GM12878 (cell line): ENCODE measurements at regions of chr4 and their contacts with region 1.

Region 1: GRCh38 chr4:156560701-156561100 is 410.9 kb downstream of the PDGFC start:
- DNase-seq: no peak
- ATAC-seq: no peak
- H3K4me3 ChIP-seq: no peak overlapping the region
- H3K27ac ChIP-seq: no peak overlapping the region
- H3K4me1 ChIP-seq: no peaks in the 10 kb centered on the region
- H3K27me3 ChIP-seq: no peaks in the 10 kb centered on the region
- CTCF ChIP-seq: no peak
- EP300 ChIP-seq: no peak
- POLR2A ChIP-seq: no peak
- RAD21 ChIP-seq: no peak

Region 2: DNA sequence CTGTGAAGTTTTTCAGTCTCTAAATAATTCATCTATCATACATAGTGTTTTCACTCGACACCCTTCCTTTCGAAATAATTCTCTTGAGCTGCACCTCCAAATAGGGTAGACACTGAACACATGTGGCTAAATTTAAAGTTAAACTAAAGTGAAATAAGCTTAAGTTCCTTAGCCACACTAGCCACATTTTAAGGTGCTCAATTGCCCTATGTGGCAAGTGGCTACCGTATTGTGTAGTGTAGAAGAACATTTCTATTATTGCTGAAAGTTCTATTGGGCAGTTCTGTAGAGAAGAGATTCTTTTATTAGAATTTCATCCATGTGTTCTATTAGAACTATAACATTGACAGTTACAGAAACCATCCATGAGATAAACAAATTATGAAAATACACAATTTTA is 500.0 kb before region 1 on chr4:
- CTCF ChIA-PET with region 1: no interaction called
- POLR2A ChIA-PET with region 1: no interaction called
- RAD21 ChIA-PET with region 1: no interaction called
- SMC1A ChIA-PET with region 1: no interaction called
- in situ Hi-C with region 1: no loop called
- intact Hi-C with region 1: no loop called
- DNase-seq: no peak
- ATAC-seq: no peak
- H3K4me3 ChIP-seq: no peak overlapping the region
- H3K27ac ChIP-seq: no peak overlapping the region
- H3K4me1 ChIP-seq: no peaks in the 10 kb centered on the region
- H3K27me3 ChIP-seq: no peaks in the 10 kb centered on the region
- CTCF ChIP-seq: no peak
- EP300 ChIP-seq: no peak
- POLR2A ChIP-seq: no peak
- RAD21 ChIP-seq: no peak

Region 3: DNA sequence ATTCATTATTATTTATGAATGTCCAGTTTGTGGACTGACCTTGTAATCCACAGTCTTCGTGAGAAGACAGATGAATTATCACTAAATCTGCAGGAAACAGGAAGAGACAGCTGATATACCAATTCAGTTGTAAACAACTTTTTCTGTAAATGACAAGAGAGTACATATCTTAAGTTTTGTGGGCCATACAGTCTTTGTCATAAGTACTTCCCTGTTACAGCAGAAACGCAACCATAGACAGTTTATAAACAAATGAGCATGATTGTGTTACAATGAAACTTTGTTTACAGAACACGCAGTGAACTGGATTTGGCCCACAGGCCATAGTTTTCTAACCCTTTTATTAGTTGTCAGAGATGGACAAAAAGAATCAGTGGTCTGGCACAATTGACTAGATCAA is 32.5 kb before region 1 on chr4:
- CTCF ChIA-PET with region 1: no interaction called
- POLR2A ChIA-PET with region 1: no interaction called
- RAD21 ChIA-PET with region 1: no interaction called
- SMC1A ChIA-PET with region 1: no interaction called
- in situ Hi-C with region 1: no loop called
- intact Hi-C with region 1: loop called (anchors 1 kb)
- DNase-seq: no peak
- ATAC-seq: no peak
- H3K4me3 ChIP-seq: no peak overlapping the region
- H3K27ac ChIP-seq: no peak overlapping the region
- H3K4me1 ChIP-seq: no peaks in the 10 kb centered on the region
- H3K27me3 ChIP-seq: no peaks in the 10 kb centered on the region
- CTCF ChIP-seq: no peak
- EP300 ChIP-seq: no peak
- POLR2A ChIP-seq: no peak
- RAD21 ChIP-seq: no peak

Region 4: GRCh38 chr4:156598138-156598681 is 37.5 kb after region 1 on chr4:
- CTCF ChIA-PET with region 1: no interaction called
- POLR2A ChIA-PET with region 1: no interaction called
- RAD21 ChIA-PET with region 1: no interaction called
- SMC1A ChIA-PET with region 1: no interaction called
- in situ Hi-C with region 1: no loop called
- intact Hi-C with region 1: no loop called
- DNase-seq: no peak
- ATAC-seq: no peak
- H3K4me3 ChIP-seq: no peak overlapping the region
- H3K27ac ChIP-seq: no peak overlapping the region
- H3K4me1 ChIP-seq: no peaks in the 10 kb centered on the region
- H3K27me3 ChIP-seq: no peaks in the 10 kb centered on the region
- CTCF ChIP-seq: no peak
- EP300 ChIP-seq: no peak
- POLR2A ChIP-seq: no peak
- RAD21 ChIP-seq: no peak

Region 5: GRCh38 chr4:156754832-156755570 is 194.3 kb after region 1 on chr4:
- CTCF ChIA-PET with region 1: no interaction called
- POLR2A ChIA-PET with region 1: no interaction called
- RAD21 ChIA-PET with region 1: no interaction called
- SMC1A ChIA-PET with region 1: no interaction called
- in situ Hi-C with region 1: no loop called
- intact Hi-C with region 1: no loop called
- DNase-seq: no peak
- ATAC-seq: peak; percentile 39; the same call in 1 of the 3 replicates
- H3K4me3 ChIP-seq: no peak overlapping the region
- H3K27ac ChIP-seq: no peak overlapping the region
- H3K4me1 ChIP-seq: no peaks in the 10 kb centered on the region
- H3K27me3 ChIP-seq: no peaks in the 10 kb centered on the region
- CTCF ChIP-seq: no peak
- EP300 ChIP-seq: no peak
- POLR2A ChIP-seq: no peak
- RAD21 ChIP-seq: no peak